ENCODE measurements at regions of chr17 and their contacts with region 1.

Region 1: DNA sequence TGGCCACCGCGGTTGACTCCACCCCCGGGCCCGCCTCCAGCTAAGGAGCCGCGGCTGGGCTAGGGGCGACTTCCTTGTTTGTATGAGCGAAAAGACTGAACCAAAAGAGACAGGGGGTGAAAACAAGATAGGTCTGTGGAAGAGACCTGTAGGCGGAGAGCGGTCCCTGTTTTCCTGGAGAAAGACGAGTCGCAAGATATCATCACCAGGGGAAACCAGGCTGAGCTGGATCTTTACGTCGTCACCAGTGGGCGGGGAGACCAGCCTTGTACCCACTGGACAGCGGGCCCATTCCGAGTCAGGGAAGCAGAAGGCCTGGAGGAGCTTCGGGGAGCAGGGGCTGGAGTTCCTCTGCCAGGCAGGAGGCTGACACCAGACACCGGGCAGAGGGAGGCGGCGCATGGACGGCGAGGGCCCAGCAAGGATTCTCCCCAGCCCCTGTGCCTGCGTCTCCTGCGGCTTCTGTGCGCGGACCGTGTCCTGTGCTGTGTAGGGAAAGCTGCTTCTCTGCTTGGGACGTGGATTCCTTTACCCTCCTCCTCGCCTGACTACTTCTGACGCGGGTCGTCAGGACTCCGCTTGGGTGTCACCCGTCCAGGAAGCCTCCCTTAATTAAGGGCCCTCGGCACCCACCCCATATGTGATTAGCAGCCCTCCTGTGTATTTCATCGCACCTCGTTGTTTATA is 10.3 kb upstream of the ARL4D start:
- DNase-seq: peak; percentile 96
- ATAC-seq: peak; percentile 74
- H3K4me3 ChIP-seq: peak overlapping the region; percentile 63 to 95 (median 91)
- H3K4me3 Mint-ChIP-seq: peak overlapping the region; percentile 89
- H3K27ac ChIP-seq: peak overlapping the region; percentile 95 to 96
- H3K27ac Mint-ChIP-seq: peak overlapping the region; percentile 98
- H3K4me1 ChIP-seq: peaks cover 18 to 21% of the 10 kb centered on the region in 2 donors
- H3K4me1 Mint-ChIP-seq: peaks cover 38% of the 10 kb centered on the region
- H3K27me3 ChIP-seq: no peaks in the 10 kb centered on the region
- H3K27me3 Mint-ChIP-seq: no peaks in the 10 kb centered on the region
- CTCF ChIP-seq: no peak

Region 2: GRCh38 chr17:43006639-43007551 is 381.6 kb before region 1 on chr17 and contains the start of gene IFI35:
- CTCF ChIA-PET with region 1: interaction called, 3 read pairs
- POLR2A ChIA-PET with region 1: no interaction called
- intact Hi-C with region 1: loop called (anchors 1 kb)
- DNase-seq: peak; percentile 89
- ATAC-seq: peak; percentile 99
- H3K4me3 ChIP-seq: peak within 1 kb of the TSS; percentile 73 to 91 (median 82)
- H3K4me3 Mint-ChIP-seq: peak within 1 kb of the TSS; percentile 100
- H3K27ac ChIP-seq: peak within 1 kb of the TSS; percentile 83 to 93
- H3K27ac Mint-ChIP-seq: peak within 1 kb of the TSS; percentile 100
- H3K4me1 ChIP-seq: peaks cover 8 to 13% of the 10 kb centered on the region in 2 donors
- H3K4me1 Mint-ChIP-seq: peaks cover 16% of the 10 kb centered on the region
- H3K27me3 ChIP-seq: no peaks in the 10 kb centered on the region
- H3K27me3 Mint-ChIP-seq: no peaks in the 10 kb centered on the region
- CTCF ChIP-seq: peak; percentile 64
- total RNA-seq, gene IFI35: 34.7 and 37.2 TPM in 2 replicates

Region 3: DNA sequence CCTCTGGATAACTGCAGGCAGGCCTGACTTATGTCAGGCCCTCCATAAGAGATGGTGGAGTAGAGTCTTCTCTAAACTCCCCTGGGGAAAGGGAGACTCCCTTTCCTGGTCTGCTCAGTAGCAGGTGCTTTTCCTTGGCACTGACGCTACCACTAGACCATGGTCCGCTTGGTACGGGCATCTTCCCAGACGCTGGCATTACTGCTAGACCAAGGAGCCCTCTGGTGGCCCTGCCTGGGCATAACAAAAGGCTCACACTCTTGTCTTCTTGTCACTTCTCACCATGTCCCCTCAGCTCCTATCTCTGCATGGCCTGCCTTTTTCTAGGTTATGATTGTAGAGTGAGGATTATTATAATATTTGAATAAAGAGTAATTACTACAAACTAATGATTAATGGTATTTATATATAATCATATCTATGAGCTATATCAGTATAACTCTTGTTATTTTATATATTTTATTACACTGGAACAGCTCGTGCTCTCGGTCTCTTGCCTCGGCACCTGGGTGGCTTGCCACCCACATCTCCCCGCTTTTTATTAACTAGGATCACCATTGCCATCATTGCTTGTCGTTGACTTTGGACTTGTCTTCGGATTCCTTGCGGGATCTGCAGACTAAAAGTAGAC is 49.5 kb before region 1 on chr17:
- CTCF ChIA-PET with region 1: interaction called, 8 read pairs
- POLR2A ChIA-PET with region 1: no interaction called
- intact Hi-C with region 1: loop called (anchors 1 kb)
- DNase-seq: peak; percentile 73
- ATAC-seq: no peak
- H3K4me3 ChIP-seq: no peak overlapping the region
- H3K4me3 Mint-ChIP-seq: no peak overlapping the region
- H3K27ac ChIP-seq: no peak overlapping the region
- H3K27ac Mint-ChIP-seq: no peak overlapping the region
- H3K4me1 ChIP-seq: peaks cover 9 to 19% of the 10 kb centered on the region in 2 donors
- H3K4me1 Mint-ChIP-seq: peaks cover 21% of the 10 kb centered on the region
- H3K27me3 ChIP-seq: no peaks in the 10 kb centered on the region
- H3K27me3 Mint-ChIP-seq: peaks cover 7% of the 10 kb centered on the region
- CTCF ChIP-seq: peak; percentile 86

Region 4: DNA sequence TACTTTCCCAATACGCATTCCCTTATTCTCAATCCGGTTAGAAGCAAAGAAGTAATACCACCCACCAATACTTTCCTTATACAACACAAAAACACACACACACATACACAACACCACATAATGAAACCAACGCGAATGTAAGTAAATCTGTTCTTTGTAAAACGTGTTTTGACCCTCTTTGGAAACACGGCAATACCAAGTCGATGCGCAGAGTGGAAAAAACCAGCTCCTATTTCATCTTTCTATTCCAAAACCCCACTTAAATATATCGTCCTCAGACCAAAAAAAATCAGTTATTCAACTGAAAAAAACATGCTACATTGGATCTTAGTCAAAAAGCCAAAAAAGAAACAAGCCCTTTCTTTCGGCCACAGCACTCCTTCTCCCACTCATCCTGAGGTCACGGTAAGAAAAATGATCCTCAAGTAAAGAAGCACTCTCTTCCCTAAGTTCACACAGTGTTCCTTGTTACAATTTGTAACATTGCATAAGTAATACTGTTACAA is 20.7 kb before region 1 on chr17:
- CTCF ChIA-PET with region 1: interaction called, 71 read pairs
- POLR2A ChIA-PET with region 1: interaction called, 220 read pairs
- intact Hi-C with region 1: loop called (anchors 1 kb)
- DNase-seq: no peak
- ATAC-seq: peak; percentile 40
- H3K4me3 ChIP-seq: peak overlapping the region; percentile 59 to 84 (median 64)
- H3K4me3 Mint-ChIP-seq: peak overlapping the region; percentile 99
- H3K27ac ChIP-seq: peak overlapping the region; percentile 96 to 98
- H3K27ac Mint-ChIP-seq: peak overlapping the region; percentile 100
- H3K4me1 ChIP-seq: peaks cover 33 to 50% of the 10 kb centered on the region in 2 donors
- H3K4me1 Mint-ChIP-seq: peaks cover 44% of the 10 kb centered on the region
- H3K27me3 ChIP-seq: no peaks in the 10 kb centered on the region
- H3K27me3 Mint-ChIP-seq: no peaks in the 10 kb centered on the region
- CTCF ChIP-seq: no peak

Measured in B cell (primary cell).